Endothelial cell of umbilical vein (primary cell): ENCODE measurements at regions of chr10 and their contacts with region 1.

Region 1: DNA sequence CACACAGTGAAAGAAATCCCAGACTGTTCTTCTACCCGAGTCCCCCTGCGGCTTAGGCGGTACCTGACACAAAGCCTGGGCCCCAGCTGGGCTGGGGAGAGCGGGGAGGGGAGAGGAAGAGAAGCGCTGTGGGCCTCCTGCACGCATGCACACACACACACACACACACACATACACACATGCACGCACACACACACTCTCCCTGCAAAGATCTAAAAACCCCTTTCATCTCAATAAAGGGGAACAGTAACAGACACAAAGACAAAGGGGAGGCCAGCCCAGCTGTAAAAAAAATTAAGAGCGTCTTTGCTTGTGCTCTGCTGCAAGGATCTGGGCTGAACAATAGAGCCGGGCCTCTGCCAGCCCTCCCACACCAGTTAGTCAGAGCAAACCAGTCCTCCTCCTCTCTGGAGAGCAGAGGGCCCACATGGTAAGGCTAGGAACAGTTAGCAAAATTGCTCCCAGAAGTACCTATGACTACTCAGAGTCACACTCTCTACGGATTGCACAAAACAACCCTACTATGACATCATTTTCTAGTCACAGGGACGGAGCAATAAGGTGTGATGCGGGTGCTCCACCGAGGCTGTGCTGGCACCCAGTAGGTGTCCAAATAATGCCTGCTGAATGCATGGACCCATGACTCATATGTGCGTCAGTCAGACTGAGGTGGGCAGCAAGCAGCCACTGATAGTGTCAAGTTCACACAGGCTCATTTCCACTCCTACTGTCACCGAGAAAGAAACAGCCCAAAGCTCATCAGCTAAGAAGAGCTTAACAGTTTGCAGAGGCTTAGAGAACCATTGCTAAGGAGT is 9.2 kb downstream of the ITPRIP start:
- DNase-seq: peak; percentile 86
- H3K4me3 ChIP-seq: peak overlapping the region in 1 of 3 experiments; percentile 1
- H3K27ac ChIP-seq: peak overlapping the region; percentile 96
- H3K4me1 ChIP-seq: peaks cover 91% of the 10 kb centered on the region
- H3K27me3 ChIP-seq: no peaks in the 10 kb centered on the region
- CTCF ChIP-seq: no peak
- POLR2A ChIP-seq: no peak

Region 2: GRCh38 chr10:103166532-103166931 is 1162.6 kb before region 1 on chr10:
- CTCF ChIA-PET with region 1: no interaction called
- POLR2A ChIA-PET with region 1: no interaction called
- dilution Hi-C with region 1: no loop called
- intact Hi-C with region 1: no loop called
- DNase-seq: no peak
- H3K4me3 ChIP-seq: no peak overlapping the region
- H3K27ac ChIP-seq: no peak overlapping the region
- H3K4me1 ChIP-seq: peaks cover 29% of the 10 kb centered on the region
- H3K27me3 ChIP-seq: no peaks in the 10 kb centered on the region
- CTCF ChIP-seq: no peak
- POLR2A ChIP-seq: no peak

Region 3: DNA sequence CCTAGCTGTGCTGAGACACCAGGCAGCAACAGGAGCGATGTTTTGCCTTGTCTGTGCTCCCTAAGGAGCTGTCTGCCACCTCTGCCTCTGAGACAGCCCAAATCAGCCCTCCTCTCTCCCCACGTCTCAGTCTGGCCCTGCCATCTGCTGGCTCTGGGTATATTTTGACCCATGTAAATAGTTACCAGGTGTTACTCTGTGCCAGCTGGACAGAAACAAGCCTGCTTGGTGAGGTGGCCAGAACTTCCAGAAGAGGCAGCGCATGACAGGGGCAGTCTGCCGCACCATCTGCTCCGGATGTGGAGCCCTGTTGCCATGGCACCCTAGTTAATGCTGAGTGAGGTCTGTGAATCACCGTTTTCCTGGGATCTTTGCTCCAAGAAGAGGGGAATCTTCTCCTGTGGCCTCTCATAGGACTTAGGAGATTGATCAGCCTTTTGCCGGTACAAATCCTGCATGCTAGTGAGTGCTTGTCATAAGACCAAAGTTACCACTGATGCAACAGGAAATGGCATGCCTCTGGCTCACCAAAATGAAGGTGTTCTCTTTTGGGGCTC is 28.3 kb before region 1 on chr10:
- CTCF ChIA-PET with region 1: interaction called, 33 read pairs
- POLR2A ChIA-PET with region 1: interaction called, 4 read pairs
- dilution Hi-C with region 1: no loop called
- intact Hi-C with region 1: loop called (anchors 1 kb)
- DNase-seq: peak; percentile 85
- H3K4me3 ChIP-seq: no peak overlapping the region
- H3K27ac ChIP-seq: peak overlapping the region; percentile 89
- H3K4me1 ChIP-seq: peaks cover 31% of the 10 kb centered on the region
- H3K27me3 ChIP-seq: no peaks in the 10 kb centered on the region
- CTCF ChIP-seq: no peak
- POLR2A ChIP-seq: no peak